Esophagus muscularis mucosa (tissue), 4 donors: ENCODE measurements at regions of chr3 and their contacts with region 1.

Region 1: DNA sequence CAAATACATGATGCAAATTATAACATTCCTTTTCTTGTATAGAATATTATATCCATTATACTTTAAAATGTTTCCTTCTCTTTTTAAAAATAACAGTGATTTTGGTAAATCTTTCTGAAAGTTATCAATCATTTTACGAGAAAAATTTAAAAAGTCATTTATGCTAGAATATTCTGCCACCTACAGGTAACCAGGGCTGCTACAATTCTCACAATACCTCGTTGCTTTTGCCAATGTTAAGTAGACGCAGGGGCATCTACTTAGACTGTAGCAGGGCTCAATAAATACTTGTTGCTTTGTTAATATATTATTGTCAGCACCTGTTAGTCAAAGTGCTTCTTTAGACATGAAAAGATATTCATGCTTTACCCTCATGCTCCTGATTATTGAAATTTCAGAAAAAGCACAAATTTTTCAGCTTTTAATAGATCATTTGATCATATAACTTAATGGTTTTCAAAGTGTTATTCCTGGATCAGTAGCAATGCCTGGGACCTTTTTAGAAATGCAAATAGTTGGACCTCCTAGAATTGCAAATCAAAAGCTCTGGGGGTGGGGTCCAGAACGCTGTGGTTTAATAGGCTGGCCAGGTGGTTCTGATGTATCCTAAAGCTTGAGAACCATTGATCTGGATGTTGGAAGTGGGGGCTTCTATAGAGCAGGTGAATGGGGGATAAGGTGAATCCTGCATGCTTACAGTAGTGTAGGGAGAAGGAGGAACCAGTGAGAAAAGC is 223.6 kb upstream of the PDZRN3 start:
- DNase-seq: no peak
- H3K4me3 ChIP-seq: no peak overlapping the region
- H3K27ac ChIP-seq: no peak overlapping the region
- H3K4me1 ChIP-seq: no peaks in the 10 kb centered on the region
- H3K27me3 ChIP-seq: no peaks in the 10 kb centered on the region
- CTCF ChIP-seq: peak; percentile 72 to 77 (median 72)
- EP300 ChIP-seq: no peak
- POLR2A ChIP-seq: no peak

Region 2: DNA sequence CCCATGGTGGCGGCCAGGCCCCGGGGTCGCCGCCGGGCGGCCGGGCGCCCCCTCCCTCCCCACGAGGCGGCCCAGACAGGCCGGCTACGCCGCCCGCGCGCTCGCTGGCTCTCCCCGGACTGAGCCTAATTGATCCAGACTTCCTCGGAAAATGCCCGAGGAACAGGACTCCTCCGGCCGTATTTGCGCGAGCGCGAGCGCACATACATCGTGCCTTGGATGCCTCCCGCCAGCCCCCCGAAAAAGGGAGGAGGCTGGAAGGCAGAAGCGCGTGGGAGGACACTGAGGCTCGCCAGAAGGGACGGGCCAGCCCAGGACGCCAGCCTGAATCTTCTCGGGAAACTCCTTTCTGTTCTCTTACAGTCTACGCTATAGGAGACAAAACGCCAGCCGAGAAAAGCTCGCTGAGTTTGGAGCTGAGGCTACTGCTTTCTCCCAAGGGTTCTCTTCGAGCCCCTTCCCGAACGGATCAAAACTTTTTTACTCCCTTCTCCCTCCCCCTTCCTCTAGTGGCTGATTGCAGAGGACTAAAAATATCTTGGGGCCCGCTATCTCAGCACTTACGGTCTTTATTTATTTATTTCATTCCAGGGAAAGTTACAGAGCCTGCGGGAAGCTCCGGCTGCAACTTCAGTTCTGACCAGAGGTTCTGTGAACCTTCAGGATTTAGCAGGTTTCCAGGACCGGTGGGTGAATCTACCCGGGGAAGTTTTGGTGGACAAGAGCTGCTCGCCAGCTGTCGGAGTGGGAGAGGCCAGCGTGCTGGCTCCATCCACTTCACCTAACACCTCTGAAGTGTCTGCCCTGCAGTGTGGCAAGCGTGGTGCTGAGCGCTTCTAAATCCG is 223.3 kb before region 1 on chr3 and contains the start of gene PDZRN3:
- intact Hi-C with region 1: loop called (anchors 5 kb)
- DNase-seq: no peak
- H3K4me3 ChIP-seq: peak within 1 kb of the TSS; percentile 76 to 96 (median 88)
- H3K27ac ChIP-seq: peak within 1 kb of the TSS; percentile 88 to 97 (median 92)
- H3K4me1 ChIP-seq: peaks cover 16 to 43% (median 40%) of the 10 kb centered on the region in 4 donors
- H3K27me3 ChIP-seq: no peaks in the 10 kb centered on the region
- CTCF ChIP-seq: no peak
- EP300 ChIP-seq: no peak
- POLR2A ChIP-seq: no peak
- total RNA-seq, gene PDZRN3: 149 to 314 (median 220) TPM